WTC11 (cell line): ENCODE measurements at regions of chr10 and their contacts with region 1.

Region 1: DNA sequence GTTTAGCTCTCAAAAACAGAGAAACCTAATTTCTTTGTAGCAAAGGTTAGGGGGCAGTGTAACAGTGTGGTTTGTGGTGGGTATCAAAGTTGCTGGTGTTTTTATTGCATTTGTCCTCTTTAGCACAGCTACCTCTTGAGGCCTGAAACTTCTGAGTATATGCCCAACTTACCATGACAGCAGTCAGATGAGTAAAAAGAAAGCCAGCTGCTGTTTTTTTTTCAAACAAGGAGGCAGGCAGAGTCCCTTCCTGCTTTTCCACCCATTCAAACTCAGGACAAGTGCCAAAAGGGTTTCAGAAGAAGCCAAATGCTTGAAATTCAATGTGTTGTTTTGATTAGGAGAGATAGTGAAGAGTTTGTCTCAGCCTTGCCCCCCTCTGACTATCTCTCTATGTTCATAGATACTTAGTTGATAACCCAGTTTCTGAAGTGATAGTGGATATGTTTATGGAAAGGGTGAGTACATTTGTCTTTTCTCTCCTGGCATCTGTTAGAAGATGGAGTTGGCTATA is 23.1 kb downstream of the GBF1 start:
- DNase-seq: no peak
- ATAC-seq: no peak
- H3K4me3 Mint-ChIP-seq: no peak overlapping the region
- H3K27ac Mint-ChIP-seq: no peak overlapping the region
- H3K4me1 Mint-ChIP-seq: peaks cover 4% of the 10 kb centered on the region; the same call in 1 of the 2 replicates
- H3K27me3 Mint-ChIP-seq: no peaks in the 10 kb centered on the region
- CTCF ChIP-seq: no peak

Region 2: DNA sequence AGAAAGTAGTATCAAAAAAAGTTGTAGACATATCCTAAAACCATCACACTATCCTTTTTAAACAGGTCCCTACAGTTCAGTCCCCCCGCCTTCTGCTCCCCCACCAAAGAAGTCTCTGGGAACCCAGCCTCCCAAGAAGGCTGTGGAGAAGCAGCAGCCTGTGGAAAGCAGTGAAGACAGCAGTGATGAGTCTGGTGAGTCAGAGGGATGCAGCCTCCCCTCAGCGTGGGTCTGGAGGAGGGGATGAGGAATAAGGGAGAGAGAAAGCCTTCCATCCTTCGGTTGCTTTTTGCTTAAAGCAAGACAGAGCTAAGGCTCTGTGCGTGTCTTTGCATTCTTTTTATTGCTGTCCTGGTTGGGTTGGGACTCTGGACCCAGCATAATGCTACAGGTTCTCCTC is 108.6 kb before region 1 on chr10:
- CTCF ChIA-PET with region 1: no interaction called
- POLR2A ChIA-PET with region 1: no interaction called
- DNase-seq: no peak
- ATAC-seq: no peak
- H3K4me3 Mint-ChIP-seq: no peak overlapping the region
- H3K27ac Mint-ChIP-seq: no peak overlapping the region
- H3K4me1 Mint-ChIP-seq: peaks cover 8% of the 10 kb centered on the region
- H3K27me3 Mint-ChIP-seq: no peaks in the 10 kb centered on the region
- CTCF ChIP-seq: no peak

Region 3: DNA sequence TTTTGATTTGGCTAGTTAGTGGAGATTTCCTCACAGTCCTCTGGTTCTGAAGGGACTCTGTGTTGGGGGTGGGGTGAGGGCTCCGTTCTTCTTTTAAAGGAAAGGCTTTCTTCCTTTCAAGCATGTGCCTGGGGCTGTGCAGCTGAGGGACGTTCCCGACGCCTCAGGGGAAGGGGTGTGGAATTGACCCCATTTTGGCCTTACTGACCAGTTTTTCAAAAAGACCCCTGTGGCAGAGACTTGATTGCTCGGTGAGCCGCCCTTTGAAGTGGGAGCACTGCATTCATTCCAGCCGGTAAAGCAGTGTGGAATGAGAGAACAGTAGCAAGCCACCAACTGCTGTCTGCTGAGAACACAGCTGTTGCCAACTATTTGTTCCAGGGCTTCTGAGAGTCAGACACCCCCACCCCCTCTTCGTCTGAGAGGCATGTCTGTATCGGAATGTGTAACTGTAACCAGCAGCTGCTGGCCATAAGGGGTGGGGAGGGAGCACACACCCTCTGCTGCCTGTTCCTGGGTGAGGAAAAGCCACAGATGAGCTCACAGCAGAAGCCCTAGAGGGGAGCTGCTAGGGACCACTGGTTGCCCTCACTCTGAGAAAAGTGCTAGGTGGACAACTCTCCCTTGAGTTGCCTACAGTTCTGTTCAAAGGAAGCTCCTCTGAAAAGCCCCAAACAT is 508.5 kb after region 1 on chr10:
- CTCF ChIA-PET with region 1: no interaction called
- POLR2A ChIA-PET with region 1: interaction called, 11 read pairs
- DNase-seq: peak; percentile 66
- ATAC-seq: peak; percentile 66
- H3K4me3 Mint-ChIP-seq: peak overlapping the region; percentile 41
- H3K27ac Mint-ChIP-seq: peak overlapping the region; percentile 32
- H3K4me1 Mint-ChIP-seq: peaks cover 70% of the 10 kb centered on the region
- H3K27me3 Mint-ChIP-seq: no peaks in the 10 kb centered on the region
- CTCF ChIP-seq: no peak